ENCODE measurements at regions of chr12 and their contacts with region 1.

Region 1: GRCh38 chr12:76020731-76021672 is 10.6 kb downstream of the PHLDA1 start:
- DNase-seq: peak; percentile 91
- H3K4me3 Mint-ChIP-seq: peak overlapping the region; percentile 72
- H3K27ac Mint-ChIP-seq: peak overlapping the region; percentile 98
- H3K4me1 Mint-ChIP-seq: peaks cover 51% of the 10 kb centered on the region
- H3K27me3 Mint-ChIP-seq: no peaks in the 10 kb centered on the region

Region 2: GRCh38 chr12:75848431-75848925 is 172.5 kb before region 1 on chr12:
- intact Hi-C with region 1: no loop called
- DNase-seq: no peak
- H3K4me3 Mint-ChIP-seq: no peak overlapping the region
- H3K27ac Mint-ChIP-seq: no peak overlapping the region
- H3K4me1 Mint-ChIP-seq: peaks cover 3% of the 10 kb centered on the region
- H3K27me3 Mint-ChIP-seq: peaks cover 30% of the 10 kb centered on the region

Region 3: GRCh38 chr12:75913502-75914351 is 107.3 kb before region 1 on chr12:
- intact Hi-C with region 1: loop called (anchors 1 kb)
- DNase-seq: peak; percentile 63
- H3K4me3 Mint-ChIP-seq: no peak overlapping the region
- H3K27ac Mint-ChIP-seq: peak overlapping the region; percentile 65
- H3K4me1 Mint-ChIP-seq: peaks cover 25% of the 10 kb centered on the region
- H3K27me3 Mint-ChIP-seq: peaks cover 3% of the 10 kb centered on the region

Region 4: DNA sequence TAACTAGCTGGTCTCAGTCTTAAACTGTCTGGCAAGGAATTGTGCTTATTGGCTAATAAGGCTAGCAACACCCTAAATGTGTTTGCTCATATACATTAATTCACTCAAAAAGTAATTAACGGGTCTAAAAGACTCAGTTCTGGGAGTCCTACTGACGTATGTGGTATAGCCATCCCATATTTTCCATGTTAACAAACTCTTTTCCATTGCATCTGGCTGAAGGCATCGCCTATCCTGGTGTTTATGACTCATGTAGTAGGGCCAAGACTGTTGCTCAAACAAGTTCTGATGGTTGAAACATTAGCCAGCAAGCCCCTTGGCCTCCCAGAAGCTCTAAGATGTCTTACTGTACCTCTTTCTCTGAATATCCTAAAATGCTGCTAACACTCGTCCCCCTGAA is 87.9 kb before region 1 on chr12:
- intact Hi-C with region 1: loop called (anchors 1 kb)
- DNase-seq: no peak
- H3K4me3 Mint-ChIP-seq: no peak overlapping the region
- H3K27ac Mint-ChIP-seq: no peak overlapping the region
- H3K4me1 Mint-ChIP-seq: peaks cover 45% of the 10 kb centered on the region
- H3K27me3 Mint-ChIP-seq: no peaks in the 10 kb centered on the region

Region 5: DNA sequence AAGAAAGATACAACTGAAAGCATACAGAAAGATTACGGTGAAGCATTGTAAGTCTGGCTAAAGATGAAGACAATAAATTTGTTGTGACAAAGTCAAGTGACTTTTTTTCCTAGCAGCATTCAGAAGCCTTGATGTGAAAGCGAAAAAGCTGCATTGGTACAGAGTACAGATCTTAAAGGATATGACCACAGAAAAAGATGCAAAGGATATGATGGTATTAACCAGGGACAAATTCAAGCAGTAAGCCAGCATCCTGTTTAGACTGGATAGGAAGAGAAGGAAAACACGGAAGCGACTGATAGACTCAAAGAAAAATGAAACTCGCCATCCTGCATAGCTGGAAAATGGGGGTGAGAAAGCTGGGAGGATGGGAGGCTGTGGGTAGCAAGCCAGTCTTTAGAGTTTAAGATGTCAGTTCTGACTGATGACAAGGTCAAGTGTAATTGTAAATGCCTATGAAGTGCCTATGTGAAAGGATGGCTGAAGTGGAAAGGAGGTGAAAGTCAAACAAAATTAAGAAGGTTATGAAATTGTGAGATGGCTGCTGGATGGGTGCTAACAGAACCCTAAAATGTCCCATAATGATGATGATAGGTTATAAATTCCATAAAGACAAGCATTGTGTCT is 81.9 kb before region 1 on chr12:
- intact Hi-C with region 1: loop called (anchors 1 kb)
- DNase-seq: peak; percentile 70
- H3K4me3 Mint-ChIP-seq: no peak overlapping the region
- H3K27ac Mint-ChIP-seq: no peak overlapping the region
- H3K4me1 Mint-ChIP-seq: peaks cover 21% of the 10 kb centered on the region
- H3K27me3 Mint-ChIP-seq: no peaks in the 10 kb centered on the region

Region 6: GRCh38 chr12:75994186-75994731 is 26.7 kb before region 1 on chr12:
- intact Hi-C with region 1: loop called (anchors 1 kb)
- DNase-seq: peak; percentile 71
- H3K4me3 Mint-ChIP-seq: peak overlapping the region; percentile 4
- H3K27ac Mint-ChIP-seq: peak overlapping the region; percentile 90
- H3K4me1 Mint-ChIP-seq: peaks cover 24% of the 10 kb centered on the region
- H3K27me3 Mint-ChIP-seq: no peaks in the 10 kb centered on the region